Panc1 (cell line): ENCODE measurements at regions of chrX and their contacts with region 1.

Region 1: GRCh38 chrX:78517124-78517523 is 142.0 kb downstream of the RTL3 start:
- DNase-seq: no peak
- ATAC-seq: no peak
- H3K4me3 ChIP-seq: no peak overlapping the region
- H3K27ac ChIP-seq: no peak overlapping the region
- H3K4me1 ChIP-seq: no peaks in the 10 kb centered on the region
- H3K27me3 ChIP-seq: no peaks in the 10 kb centered on the region
- CTCF ChIP-seq: no peak

Region 2: DNA sequence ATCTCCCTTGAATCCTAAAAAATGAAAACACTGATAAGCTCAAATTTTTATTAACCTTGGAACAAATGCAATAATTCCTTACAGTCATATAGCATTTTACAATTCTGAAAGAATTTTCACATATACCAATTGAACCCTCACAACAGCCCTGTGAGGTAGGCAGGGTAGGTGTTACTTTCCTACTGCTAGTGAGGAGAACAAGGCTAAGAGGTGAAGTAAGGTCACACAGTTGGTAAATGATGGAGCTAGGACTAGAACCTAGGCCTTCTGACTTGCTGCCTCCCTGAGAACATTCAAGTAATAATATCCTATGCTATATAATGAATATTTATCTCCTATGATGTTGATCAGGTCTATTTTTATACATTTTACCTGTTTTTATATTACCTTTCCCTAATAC is 387.4 kb before region 1 on chrX:
- CTCF ChIA-PET with region 1: no interaction called
- POLR2A ChIA-PET with region 1: interaction called, 17 read pairs
- in situ Hi-C with region 1: no loop called
- intact Hi-C with region 1: no loop called
- DNase-seq: no peak
- ATAC-seq: no peak
- H3K4me3 ChIP-seq: no peak overlapping the region
- H3K27ac ChIP-seq: no peak overlapping the region
- H3K4me1 ChIP-seq: no peaks in the 10 kb centered on the region
- H3K27me3 ChIP-seq: no peaks in the 10 kb centered on the region
- CTCF ChIP-seq: no peak

Region 3: DNA sequence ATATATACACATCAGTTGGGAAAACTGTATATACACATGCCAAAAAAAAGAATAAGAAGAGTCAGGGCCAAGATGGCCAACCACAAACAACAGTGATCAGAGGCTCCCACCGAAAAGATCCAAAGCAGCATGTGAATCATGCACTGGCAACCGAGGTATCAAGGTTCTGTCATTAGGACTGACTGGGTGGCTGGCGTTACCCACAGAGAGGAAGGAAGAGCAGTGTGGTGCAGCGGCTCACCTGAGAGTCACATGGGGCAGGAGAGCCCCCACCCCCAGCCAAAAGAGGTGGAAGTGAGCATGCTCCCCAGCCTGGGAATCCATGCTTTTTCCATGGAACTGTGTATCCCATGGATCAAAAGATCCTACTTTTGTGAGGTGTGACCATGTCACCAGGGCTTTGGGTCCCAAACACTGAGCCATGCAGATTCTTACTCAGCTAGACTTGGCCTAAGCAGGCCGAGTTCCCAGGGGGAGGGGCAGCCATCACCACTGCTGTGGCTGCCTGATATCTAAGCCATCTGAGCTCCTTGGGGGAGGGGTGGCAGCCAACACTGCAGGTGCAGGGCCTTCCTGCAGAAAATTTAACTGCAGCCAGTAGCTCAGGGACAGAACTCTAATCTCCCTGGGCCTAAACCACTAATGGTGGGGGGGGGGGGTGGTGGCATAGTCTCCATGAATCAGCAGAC is 480.9 kb after region 1 on chrX:
- CTCF ChIA-PET with region 1: no interaction called
- POLR2A ChIA-PET with region 1: no interaction called
- in situ Hi-C with region 1: no loop called
- intact Hi-C with region 1: no loop called
- DNase-seq: no peak
- ATAC-seq: no peak
- H3K4me3 ChIP-seq: no peak overlapping the region
- H3K27ac ChIP-seq: no peak overlapping the region
- H3K4me1 ChIP-seq: no peaks in the 10 kb centered on the region
- H3K27me3 ChIP-seq: no peaks in the 10 kb centered on the region
- CTCF ChIP-seq: no peak